Posterior cingulate gyrus (tissue), 11 donors: ENCODE measurements at regions of chr3 and their contacts with region 1.

Region 1: GRCh38 chr3:152268555-152269425 is at the start of gene MBNL1:
- DNase-seq: peak; percentile 59 to 95 (median 74)

Region 2: GRCh38 chr3:152382312-152383135 is 113.7 kb after region 1 on chr3:
- intact Hi-C with region 1: loop called (anchors 2 kb)
- DNase-seq: no peak

Region 3: DNA sequence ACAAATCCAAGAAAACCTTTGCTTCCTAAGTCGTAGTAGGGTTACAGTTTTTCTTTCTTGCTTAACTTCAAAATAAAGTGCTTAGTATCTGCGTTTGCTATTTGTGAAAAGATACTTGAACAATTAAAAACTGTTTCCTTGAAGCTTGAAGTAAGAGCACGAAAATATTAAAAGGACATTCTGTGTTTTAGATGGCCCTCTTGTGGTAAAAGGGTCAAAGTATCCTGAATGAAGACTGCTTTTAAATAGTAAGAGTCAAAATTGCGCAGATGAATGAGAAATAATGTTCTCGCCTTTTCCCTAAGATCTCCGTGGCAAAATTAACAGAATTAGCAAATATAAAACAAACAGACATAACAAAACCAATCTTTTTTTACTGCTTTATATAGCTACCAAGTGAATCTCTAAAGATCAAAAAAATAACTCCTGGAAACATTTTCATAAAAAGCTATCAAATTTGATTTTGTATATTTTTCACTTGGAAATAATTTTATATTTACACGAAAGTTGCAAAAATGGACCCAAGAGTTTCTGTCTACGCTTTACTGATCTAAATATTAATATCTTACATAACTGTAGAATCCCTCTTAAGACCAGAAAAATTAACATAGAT is 175.3 kb after region 1 on chr3:
- intact Hi-C with region 1: loop called (anchors 5 kb)
- DNase-seq: no peak